SK-N-SH (cell line): ENCODE measurements at regions of chr1 and their contacts with region 1.

Region 1: DNA sequence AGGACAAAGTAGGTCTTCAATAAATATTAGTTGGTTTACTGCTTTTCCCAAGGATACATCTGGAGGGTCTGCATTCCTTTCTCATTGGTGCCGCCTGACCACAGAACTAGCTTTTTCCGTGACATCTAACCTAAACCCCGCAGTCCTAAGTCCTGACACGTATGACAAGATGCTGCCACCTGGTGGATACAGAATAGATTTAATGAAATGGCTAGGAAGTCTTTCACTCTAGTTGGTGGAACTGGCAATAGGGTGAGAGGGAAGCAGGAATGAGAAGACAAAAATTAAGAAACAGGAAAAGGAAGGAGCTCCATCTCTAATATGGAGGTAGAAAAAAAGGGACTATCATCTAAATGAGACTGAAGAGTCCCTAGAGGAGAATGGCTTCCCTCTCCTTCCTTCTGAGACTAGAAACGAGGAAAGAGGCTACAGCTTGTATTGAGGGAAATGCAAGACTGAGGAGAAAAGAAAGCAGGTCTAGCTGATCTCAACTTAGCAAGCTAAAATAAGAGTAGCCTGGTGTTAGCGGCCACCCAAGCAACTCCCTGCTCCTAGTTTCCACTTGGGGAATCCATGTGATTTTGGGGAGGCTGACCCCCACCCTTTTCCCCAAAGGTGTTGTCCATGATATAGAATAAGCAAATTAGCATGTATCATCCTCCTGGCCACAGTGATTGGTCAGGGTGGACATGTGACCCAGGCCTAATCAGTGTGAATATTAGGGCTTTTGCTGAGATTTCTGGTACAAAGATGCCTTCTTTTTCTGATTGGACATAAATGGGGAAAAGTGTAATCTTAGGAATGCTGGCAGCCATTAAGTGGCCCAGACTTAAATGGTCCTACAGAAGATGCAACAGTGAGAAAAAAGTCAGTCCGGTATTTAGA is 5.9 kb downstream of the RFX5 start:
- DNase-seq: peak; percentile 67
- H3K4me3 ChIP-seq: no peak overlapping the region; a peak in 1 of 4 replicates
- H3K27ac ChIP-seq: peak overlapping the region; percentile 58 to 70
- H3K4me1 ChIP-seq: peaks cover 6 to 7% of the 10 kb centered on the region in 2 experiments; a peak in 2 of 4 replicates
- H3K27me3 ChIP-seq: no peaks in the 10 kb centered on the region
- CTCF ChIP-seq: peak; percentile 77
- EP300 ChIP-seq: no peak
- RAD21 ChIP-seq: peak; percentile 90

Region 2: GRCh38 chr1:151281969-151282882 is 58.9 kb before region 1 on chr1 and contains the start of gene ZNF687:
- CTCF ChIA-PET with region 1: interaction called, 36 read pairs
- POLR2A ChIA-PET with region 1: interaction called, 9 read pairs
- DNase-seq: peak; percentile 97
- H3K4me3 ChIP-seq: peak within 1 kb of the TSS; percentile 70 to 86
- H3K27ac ChIP-seq: peak within 1 kb of the TSS; percentile 98 to 100
- H3K4me1 ChIP-seq: peaks cover 0 to 14% of the 10 kb centered on the region in 2 experiments; a peak in 1 of 4 replicates
- H3K27me3 ChIP-seq: no peaks in the 10 kb centered on the region
- CTCF ChIP-seq: no peak
- EP300 ChIP-seq: no peak
- RAD21 ChIP-seq: no peak
- polyA plus RNA-seq, gene ZNF687: 14.6 and 15.8 TPM in 2 replicates

Region 3: GRCh38 chr1:151311589-151312331 is 29.4 kb before region 1 on chr1:
- CTCF ChIA-PET with region 1: interaction called, 309 read pairs
- POLR2A ChIA-PET with region 1: interaction called, 3 read pairs
- DNase-seq: peak; percentile 30
- H3K4me3 ChIP-seq: no peak overlapping the region
- H3K27ac ChIP-seq: peak overlapping the region; percentile 32 to 90; a peak in 3 of 4 replicates
- H3K4me1 ChIP-seq: peaks cover 27 to 44% of the 10 kb centered on the region in 2 experiments
- H3K27me3 ChIP-seq: no peaks in the 10 kb centered on the region
- CTCF ChIP-seq: no peak
- EP300 ChIP-seq: peak in 1 of 2 experiments; percentile 76; a peak in 1 of 4 replicates
- RAD21 ChIP-seq: no peak

Region 4: GRCh38 chr1:151352006-151352689 is 11.0 kb after region 1 on chr1:
- CTCF ChIA-PET with region 1: interaction called, 34 read pairs
- POLR2A ChIA-PET with region 1: no interaction called
- DNase-seq: no peak
- H3K4me3 ChIP-seq: no peak overlapping the region
- H3K27ac ChIP-seq: no peak overlapping the region
- H3K4me1 ChIP-seq: peaks cover 0 to 4% of the 10 kb centered on the region in 2 experiments; a peak in 1 of 4 replicates
- H3K27me3 ChIP-seq: no peaks in the 10 kb centered on the region; the same call in 1 of the 2 replicates
- CTCF ChIP-seq: no peak
- EP300 ChIP-seq: no peak
- RAD21 ChIP-seq: no peak

Region 5: DNA sequence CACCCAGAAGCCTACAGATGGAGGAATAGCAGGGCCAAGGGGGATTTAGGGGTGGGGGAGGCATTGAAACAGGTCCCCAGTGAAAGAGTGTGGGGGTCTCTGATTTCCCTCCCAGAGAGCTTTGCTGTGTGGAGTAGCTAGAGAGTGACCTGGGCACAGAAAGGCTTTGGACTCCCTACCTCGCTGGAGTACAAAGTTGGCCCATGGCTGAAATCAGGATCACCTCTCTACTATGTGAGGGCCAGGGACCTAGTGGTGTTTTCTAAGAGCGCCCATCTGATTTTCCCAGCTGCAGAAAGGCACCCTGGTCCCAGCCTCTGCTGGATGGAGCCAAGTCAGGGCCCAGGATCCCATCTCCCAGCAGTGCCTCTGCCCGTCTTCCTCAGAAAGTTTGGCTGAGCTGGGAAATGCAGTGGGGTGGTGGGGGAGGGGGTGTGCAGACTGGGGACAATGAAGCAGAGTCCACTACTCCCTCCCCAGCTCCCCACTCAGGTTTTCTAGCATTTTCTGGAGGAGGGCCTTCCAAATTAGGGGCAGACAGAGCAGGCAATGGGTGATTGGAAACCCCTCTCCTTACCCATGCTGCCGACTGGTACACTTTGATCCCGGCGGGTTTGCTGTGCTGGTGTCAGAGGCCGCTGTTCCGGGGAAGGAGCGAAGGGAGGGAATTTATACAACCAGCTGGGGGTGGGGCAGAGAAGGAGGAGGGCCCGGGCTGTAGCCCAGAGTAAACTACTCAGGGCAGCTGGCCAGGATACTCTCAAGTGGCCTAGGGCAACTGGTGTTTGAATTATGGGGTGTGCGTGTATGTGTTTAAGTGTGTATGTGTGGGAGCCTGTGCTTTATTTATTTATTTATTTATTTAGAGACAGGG is 31.2 kb after region 1 on chr1 and contains the start of gene SELENBP1:
- CTCF ChIA-PET with region 1: interaction called, 12 read pairs
- POLR2A ChIA-PET with region 1: no interaction called
- DNase-seq: no peak
- H3K4me3 ChIP-seq: no peak within 1 kb of the TSS
- H3K27ac ChIP-seq: no peak within 1 kb of the TSS
- H3K4me1 ChIP-seq: peaks cover 0 to 15% of the 10 kb centered on the region in 2 experiments; a peak in 1 of 4 replicates
- H3K27me3 ChIP-seq: no peaks in the 10 kb centered on the region
- CTCF ChIP-seq: no peak
- EP300 ChIP-seq: no peak
- RAD21 ChIP-seq: no peak
- polyA plus RNA-seq, gene SELENBP1: 0.11 and 0.16 TPM in 2 replicates

Region 6: GRCh38 chr1:152013664-152014237 is 672.6 kb after region 1 on chr1:
- CTCF ChIA-PET with region 1: no interaction called
- POLR2A ChIA-PET with region 1: no interaction called
- DNase-seq: no peak
- H3K4me3 ChIP-seq: no peak overlapping the region; a peak in 1 of 4 replicates
- H3K27ac ChIP-seq: no peak overlapping the region
- H3K4me1 ChIP-seq: no peaks in the 10 kb centered on the region
- H3K27me3 ChIP-seq: peaks cover 82% of the 10 kb centered on the region; the same call in 1 of the 2 replicates
- CTCF ChIP-seq: peak; percentile 55
- EP300 ChIP-seq: no peak
- RAD21 ChIP-seq: peak; percentile 25; the same call in 1 of the 2 replicates